ENCODE measurements at regions of chr3 and their contacts with region 1.

Region 1: DNA sequence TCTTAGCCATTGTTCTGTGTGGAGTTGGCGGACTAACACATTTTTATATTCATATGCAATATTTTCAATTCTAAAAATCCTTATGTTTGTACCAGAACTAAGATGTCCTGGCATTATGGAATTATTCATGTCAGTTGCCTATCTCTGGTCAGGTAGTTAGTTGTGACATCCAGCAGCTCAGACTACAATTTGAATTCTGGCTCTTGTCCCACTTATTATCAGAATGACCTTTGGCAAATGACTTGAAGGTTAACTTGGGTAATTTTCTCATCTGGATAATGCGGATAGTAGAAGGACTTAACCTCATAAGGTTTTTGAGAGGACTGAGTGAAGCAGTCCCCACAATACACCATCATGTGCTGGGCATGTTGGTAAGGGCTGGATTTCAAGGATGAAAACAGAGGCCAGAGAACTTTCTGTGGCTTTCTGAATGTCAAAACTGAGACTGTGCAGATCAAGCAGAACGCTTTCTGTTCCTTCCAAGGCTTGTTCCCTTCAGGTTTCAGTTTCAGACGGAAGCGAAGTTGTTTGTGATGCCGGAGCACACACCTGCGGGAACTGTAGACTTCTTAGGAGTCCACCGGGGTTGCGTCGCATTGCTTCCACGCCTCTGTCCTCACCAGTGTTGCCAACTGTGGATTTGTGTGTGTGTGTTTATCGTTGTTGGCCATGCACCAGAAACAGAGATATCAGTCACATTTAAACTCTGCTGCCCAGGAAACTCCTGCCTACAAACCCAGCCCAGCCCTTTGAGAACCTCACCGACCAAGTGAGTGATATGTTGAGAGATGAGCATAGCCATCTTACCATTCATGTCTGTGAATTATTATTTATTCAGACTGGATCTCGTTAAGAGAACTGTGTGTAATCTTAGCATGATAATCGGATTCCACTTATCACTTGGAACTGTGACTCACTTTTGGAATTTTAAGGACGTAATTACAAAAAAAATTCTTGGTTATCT is 76.0 kb downstream of the PTPRG start:
- DNase-seq: no peak
- H3K4me3 ChIP-seq: peak overlapping the region; percentile 48 to 60
- H3K27ac ChIP-seq: peak overlapping the region; percentile 78
- H3K4me1 ChIP-seq: peaks cover 0 to 6% of the 10 kb centered on the region in 2 donors
- H3K27me3 ChIP-seq: no peaks in the 10 kb centered on the region
- CTCF ChIP-seq: no peak

Region 2: DNA sequence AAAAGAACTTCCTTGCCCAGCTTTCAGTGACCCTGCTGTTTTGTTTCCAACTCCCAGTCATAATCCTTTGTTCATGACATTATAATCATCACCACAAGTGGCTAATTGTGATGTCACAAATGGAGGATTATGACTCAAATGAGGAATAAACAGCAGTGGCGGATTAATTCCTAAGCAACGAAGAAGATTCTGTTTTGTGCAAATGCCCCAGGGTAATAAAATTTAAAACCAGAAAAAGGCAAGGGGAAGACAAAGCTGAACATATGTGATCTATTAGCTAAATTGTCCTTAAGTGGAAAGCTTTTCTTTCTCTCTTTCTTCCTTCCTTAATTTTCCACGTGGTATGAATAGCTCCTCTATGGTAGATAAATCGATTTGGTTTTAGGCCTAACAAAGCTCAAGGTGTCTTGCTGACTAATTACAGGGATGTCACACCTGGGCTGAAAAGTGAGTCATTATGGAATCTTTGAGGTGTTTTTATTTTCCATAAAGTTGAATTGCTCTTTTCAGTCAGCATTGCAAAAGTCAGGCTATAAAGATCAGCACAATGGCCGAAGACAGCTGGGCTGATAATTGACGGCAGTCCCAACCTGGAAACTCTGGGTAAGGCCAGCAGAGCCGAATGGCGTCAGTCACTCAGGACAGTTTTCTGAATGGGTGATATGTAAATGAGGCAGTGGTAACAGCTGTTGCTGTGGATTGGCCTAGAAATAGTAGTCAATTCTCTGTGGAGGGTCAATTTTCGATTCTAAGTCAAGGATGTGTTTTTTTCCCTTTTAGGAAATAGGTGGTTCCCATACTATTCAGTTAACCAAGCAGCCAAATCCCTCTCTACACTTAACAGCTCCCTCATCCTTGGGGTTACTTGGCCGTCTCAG is 45.5 kb after region 1 on chr3:
- intact Hi-C with region 1: loop called (anchors 5 kb)
- DNase-seq: no peak
- H3K4me3 ChIP-seq: no peak overlapping the region
- H3K27ac ChIP-seq: peak overlapping the region; percentile 75 to 84
- H3K4me1 ChIP-seq: peaks cover 7 to 37% of the 10 kb centered on the region in 2 donors
- H3K27me3 ChIP-seq: no peaks in the 10 kb centered on the region
- CTCF ChIP-seq: no peak

Measured in ascending aorta (tissue), 2 donors.